ENCODE measurements at regions of chr13 and their contacts with region 1.

Region 1: DNA sequence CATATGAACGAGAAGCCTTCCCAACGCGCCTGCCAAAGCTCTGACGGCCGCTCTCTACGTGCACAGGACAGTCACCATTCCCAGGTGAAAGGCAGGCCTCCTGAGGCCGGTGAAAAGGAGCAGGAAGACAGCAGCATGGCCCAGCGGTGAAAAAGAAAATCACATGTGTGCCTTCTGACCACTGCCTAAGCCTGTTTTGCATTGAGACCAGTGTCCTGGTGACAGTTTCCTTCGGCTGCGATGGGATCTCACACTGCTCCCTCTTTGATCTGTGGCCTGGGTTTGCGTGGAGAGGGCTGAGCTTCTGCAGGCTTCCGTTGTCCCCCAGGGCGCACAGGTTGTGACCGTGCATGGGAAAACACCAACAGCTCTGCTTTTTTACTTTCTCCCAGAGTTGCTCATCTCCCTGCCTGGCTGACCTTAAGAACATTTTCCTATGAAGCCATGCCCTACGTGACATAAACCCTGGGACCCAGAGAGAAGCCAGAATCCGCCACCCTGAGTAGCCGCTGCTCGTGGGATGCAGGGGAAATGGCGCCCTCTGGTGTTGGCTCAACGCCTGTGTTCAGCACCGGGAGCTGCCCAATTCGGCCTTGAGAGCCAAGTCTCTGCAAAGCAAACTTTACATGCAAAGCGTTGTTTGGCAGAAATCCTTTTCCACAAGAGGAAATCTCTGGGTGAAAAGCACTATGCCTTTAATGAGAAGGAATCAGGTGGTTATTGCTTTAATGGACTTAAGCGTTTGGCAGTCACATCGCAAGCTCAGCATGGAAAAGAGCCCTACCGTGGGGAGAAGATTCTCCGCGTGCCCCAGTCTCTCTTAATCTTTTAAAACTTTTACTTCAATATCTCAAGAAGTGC is 112.2 kb upstream of the GPR12 start:
- DNase-seq: peak; percentile 88
- ATAC-seq: peak; percentile 92
- H3K4me3 Mint-ChIP-seq: no peak overlapping the region
- H3K27ac Mint-ChIP-seq: no peak overlapping the region
- H3K4me1 Mint-ChIP-seq: peaks cover 26% of the 10 kb centered on the region
- H3K27me3 Mint-ChIP-seq: 0 out of 2 replicates have a peak, but pooled peaks cover 2% of the 10 kb centered on the region
- CTCF ChIP-seq: peak; percentile 89

Region 2: GRCh38 chr13:26583662-26584061 is 289.1 kb before region 1 on chr13:
- CTCF ChIA-PET with region 1: no interaction called
- POLR2A ChIA-PET with region 1: no interaction called
- DNase-seq: no peak
- ATAC-seq: no peak; the same call in 1 of the 2 replicates
- H3K4me3 Mint-ChIP-seq: no peak overlapping the region
- H3K27ac Mint-ChIP-seq: peak overlapping the region; percentile 85
- H3K4me1 Mint-ChIP-seq: peaks cover 30% of the 10 kb centered on the region
- H3K27me3 Mint-ChIP-seq: no peaks in the 10 kb centered on the region
- CTCF ChIP-seq: no peak

Region 3: DNA sequence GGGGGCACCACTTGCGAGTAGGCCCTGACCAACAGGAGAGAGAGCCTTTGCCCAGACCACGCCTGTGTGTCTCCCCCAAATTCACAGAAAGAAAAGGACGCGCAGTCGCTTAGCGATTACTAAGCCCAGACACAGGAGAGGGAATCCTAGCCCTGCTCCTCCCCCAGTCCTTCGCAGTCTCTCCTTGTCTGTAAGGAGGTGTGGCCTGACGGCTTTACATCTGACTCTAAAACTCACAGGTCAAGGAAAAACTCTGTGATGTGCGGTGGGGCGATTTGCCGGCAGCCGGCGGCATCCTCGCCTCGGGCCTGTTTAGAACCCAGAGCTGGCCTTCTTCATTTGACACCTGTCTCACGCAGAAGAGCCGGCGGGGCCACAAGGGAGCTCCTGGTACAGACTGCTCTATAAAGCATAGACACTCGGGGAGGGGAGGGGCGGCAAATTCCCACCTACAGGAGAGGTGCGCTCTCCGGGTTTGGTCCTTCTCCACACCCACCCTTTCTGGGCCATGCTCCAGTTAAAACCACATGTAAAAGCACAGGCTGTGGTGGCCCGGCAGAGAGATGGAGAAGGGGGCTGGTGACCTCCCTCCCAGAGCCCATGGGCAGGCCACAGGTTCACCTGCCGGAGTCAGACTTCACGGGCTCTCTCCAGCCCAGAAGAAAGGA is 129.9 kb before region 1 on chr13:
- CTCF ChIA-PET with region 1: interaction called, 12 read pairs
- POLR2A ChIA-PET with region 1: no interaction called
- DNase-seq: peak; percentile 22
- ATAC-seq: peak; percentile 93
- H3K4me3 Mint-ChIP-seq: peak overlapping the region; percentile 46
- H3K27ac Mint-ChIP-seq: no peak overlapping the region
- H3K4me1 Mint-ChIP-seq: peaks cover 20% of the 10 kb centered on the region
- H3K27me3 Mint-ChIP-seq: peaks cover 22% of the 10 kb centered on the region
- CTCF ChIP-seq: no peak

Region 4: GRCh38 chr13:26785838-26786630 is 86.7 kb before region 1 on chr13:
- CTCF ChIA-PET with region 1: interaction called, 14 read pairs
- POLR2A ChIA-PET with region 1: no interaction called
- DNase-seq: peak; percentile 41
- ATAC-seq: peak; percentile 89
- H3K4me3 Mint-ChIP-seq: peak overlapping the region; percentile 68
- H3K27ac Mint-ChIP-seq: no peak overlapping the region
- H3K4me1 Mint-ChIP-seq: peaks cover 29% of the 10 kb centered on the region
- H3K27me3 Mint-ChIP-seq: no peaks in the 10 kb centered on the region; the same call in none of the 2 replicates
- CTCF ChIP-seq: no peak

Region 5: DNA sequence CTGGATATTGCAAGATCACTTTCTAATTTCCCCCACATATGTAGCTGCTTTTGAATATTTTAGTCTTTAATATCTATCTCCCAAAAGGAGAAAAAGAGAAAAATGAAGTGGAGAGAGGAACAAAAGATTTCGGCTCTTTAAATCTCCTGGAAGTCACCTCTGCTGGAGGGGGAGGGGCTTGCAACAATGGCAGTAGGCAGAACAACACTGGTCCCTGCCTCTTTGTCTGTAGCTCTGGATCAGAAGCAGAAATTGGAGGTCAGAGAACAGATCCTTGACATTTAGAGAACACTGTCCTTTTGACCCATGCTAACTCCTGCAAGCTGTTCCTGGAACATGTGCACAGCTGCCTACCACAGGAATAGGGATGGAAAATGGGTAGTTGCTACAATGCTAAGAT is 25.5 kb before region 1 on chr13:
- CTCF ChIA-PET with region 1: interaction called, 17 read pairs
- POLR2A ChIA-PET with region 1: no interaction called
- DNase-seq: peak; percentile 34
- ATAC-seq: peak; percentile 77
- H3K4me3 Mint-ChIP-seq: no peak overlapping the region
- H3K27ac Mint-ChIP-seq: no peak overlapping the region; the same call in none of the 2 replicates
- H3K4me1 Mint-ChIP-seq: peaks cover 34% of the 10 kb centered on the region
- H3K27me3 Mint-ChIP-seq: no peaks in the 10 kb centered on the region
- CTCF ChIP-seq: no peak

Region 6: GRCh38 chr13:26887594-26887993 is 14.8 kb after region 1 on chr13:
- CTCF ChIA-PET with region 1: interaction called, 11 read pairs
- POLR2A ChIA-PET with region 1: no interaction called
- DNase-seq: no peak
- ATAC-seq: no peak
- H3K4me3 Mint-ChIP-seq: no peak overlapping the region
- H3K27ac Mint-ChIP-seq: no peak overlapping the region
- H3K4me1 Mint-ChIP-seq: peaks cover 2% of the 10 kb centered on the region
- H3K27me3 Mint-ChIP-seq: no peaks in the 10 kb centered on the region; the same call in 1 of the 2 replicates
- CTCF ChIP-seq: no peak

Region 7: DNA sequence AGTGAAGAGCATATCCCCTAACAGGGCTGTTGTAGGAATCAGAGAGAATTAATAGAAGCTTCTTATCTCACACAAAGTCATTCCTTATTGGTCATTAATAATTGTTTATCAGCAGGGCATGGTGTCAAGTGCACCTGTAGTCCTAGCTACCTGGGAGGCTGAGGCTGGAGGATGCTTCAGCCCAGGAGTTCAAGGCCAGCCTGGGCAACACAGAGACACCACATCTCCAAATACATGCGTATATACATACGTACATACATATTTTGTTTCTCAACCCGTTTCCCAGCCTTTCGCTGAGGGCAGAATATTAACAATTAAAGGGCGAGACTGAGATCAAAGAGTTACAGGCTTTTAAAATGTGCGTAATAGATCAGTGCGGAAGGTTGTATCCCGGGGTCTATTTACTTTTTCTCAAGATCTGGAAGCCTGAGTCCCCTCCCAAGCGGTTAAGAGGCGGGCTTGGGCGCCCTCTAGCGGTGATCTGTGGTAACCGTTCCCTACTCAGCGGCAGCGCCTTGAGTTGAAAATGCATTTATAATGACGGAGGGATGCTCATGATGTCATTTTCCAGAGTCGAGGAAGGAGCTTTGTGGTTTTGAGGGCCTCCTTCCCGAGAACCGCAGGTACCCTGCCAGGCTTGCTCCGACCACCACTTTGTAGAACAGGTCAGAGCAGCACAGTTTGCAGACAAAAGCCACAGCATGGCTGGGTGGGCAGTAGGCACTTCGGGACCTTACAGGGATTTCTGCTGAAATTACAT is 57.4 kb after region 1 on chr13:
- CTCF ChIA-PET with region 1: interaction called, 32 read pairs
- POLR2A ChIA-PET with region 1: interaction called, 6 read pairs
- DNase-seq: peak; percentile 89
- ATAC-seq: peak; percentile 93
- H3K4me3 Mint-ChIP-seq: peak overlapping the region; percentile 59
- H3K27ac Mint-ChIP-seq: 0 out of 2 replicates have a peak overlapping the region, but pooled peaks have one; percentile 33
- H3K4me1 Mint-ChIP-seq: 0 out of 2 replicates have a peak, but pooled peaks cover 2% of the 10 kb centered on the region
- H3K27me3 Mint-ChIP-seq: no peaks in the 10 kb centered on the region; the same call in 1 of the 2 replicates
- CTCF ChIP-seq: peak; percentile 97